Posterior cingulate gyrus (tissue), 11 donors: ENCODE measurements at regions of chr9 and their contacts with region 1.

Region 1: DNA sequence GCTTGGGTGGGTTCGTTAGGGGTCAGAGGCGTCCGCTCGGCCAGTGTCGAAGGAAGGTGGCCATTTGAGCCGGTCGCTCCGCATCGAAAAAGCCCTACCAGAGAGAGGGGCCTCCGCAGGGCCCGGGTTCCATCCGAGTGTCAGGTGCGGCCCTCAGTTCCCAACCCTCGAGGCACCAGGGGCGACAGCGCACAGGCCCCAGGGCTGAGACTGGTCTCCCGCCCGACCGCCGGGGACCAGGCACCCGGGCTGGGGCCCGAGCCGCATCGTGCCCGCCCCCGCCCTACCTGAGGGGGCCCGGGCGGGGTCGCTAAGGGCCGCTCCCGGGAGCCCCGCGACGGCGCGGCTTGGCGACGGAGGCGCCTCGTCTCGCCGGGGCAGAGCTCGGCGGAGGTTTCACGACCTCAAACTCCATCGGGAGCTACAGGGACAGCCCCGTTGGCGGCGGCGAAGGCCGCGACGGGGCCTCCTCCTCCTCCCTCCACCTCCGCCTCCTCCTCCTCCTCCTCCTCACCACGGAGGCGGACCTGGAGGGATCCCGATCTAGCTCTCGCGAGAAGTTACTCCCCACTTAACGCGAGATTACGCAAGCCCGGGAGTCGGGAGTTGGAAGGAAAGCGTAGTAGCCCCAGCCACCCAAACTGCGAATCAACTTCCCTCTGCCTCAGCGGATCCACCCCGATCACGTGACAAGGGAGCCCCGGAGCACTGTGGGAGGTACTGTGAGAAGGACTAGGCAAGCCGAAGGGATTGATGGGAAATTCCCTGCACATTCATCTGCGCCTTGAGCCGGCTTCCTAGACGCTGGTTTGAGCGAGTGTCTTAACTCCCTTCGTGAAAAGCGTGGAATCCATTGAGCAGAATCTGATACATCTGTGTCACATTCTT is at the start of gene RC3H2:
- DNase-seq: peak; percentile 98 to 100 (median 100)

Region 2: GRCh38 chr9:122092611-122093506 is 812.2 kb before region 1 on chr9 and contains the start of gene TTLL11:
- intact Hi-C with region 1: loop called (anchors 10 kb)
- DNase-seq: peak; percentile 96 to 100 (median 98)

Region 3: GRCh38 chr9:122695696-122696095 is 209.4 kb before region 1 on chr9:
- intact Hi-C with region 1: no loop called
- DNase-seq: no peak

Region 4: DNA sequence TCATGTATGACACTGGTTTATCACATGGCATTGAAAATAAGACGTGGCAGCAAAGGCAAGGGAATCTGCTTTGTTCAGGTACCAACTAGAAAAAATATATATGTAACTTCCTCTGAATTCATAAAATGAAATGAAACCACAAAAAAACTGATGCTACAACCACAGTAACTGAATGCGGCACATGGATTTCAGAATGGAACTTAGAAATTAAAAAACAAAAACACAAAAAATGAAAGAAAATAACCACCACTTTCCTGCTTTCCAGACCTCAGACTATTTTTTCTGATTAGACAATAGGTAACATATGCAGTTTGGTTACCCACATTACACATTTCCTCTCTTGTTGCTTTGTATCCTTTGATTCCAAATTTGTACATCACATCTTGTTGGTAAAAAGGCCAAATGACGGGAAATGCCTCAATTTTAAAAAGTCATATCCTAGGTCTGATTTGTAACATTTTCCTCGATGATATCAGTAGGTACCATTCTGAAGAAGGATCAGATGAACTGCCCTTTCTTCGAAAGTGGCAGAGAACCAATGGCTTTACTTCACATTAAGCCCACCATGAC is 58.6 kb before region 1 on chr9:
- intact Hi-C with region 1: no loop called
- DNase-seq: no peak

Region 5: DNA sequence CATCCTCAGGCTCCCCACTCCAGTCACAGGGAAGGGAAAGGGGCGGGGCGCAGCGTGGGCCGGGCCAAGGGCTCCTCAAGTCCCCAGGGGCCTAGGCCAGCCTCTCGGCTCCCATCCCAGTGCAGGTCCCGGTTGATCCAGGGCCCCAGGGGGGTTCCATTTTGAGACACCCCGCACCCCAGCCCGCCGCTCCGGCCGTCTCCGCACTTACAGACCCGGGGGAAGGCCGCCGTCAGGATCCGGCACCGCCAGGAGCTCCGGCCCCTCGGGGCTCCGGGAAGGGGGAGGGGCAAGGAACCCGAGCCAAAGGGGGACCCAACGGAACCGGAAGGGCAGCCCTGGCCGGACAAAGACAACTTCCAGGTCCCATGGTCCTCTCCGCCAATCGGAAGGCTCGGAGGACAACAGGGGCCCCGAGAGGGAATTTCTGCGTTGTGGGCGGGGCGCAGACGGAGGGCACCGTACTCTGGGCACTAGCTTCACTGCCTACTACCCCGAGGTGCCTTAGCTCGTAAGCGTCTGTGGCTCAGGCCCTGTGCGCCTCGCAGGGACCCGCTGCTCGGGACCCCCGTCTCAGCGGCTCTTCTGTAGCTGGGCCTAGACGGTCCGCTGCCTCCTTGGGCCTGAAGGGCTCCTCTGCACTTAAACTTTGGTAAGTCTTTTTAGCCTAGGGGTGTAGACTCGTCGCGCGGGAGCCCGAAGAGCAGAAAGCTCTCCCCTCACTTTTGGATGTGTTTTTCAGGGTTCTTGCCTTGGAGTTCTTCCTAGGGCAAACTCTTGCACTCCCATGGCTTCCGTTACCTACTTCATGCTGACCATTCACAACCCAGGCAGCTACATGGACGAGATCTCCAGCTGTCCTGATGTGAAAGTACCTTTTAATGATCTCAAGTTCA is 26.4 kb after region 1 on chr9 and contains the start of gene ZBTB26:
- intact Hi-C with region 1: loop called (anchors 2 kb)
- DNase-seq: peak; percentile 93 to 99 (median 96)

Region 6: GRCh38 chr9:122991370-122991830 is 86.3 kb after region 1 on chr9:
- intact Hi-C with region 1: loop called (anchors 10 kb)
- DNase-seq: peak in 3 of 10 donors; percentile 18 to 75 (median 25)

Region 7: DNA sequence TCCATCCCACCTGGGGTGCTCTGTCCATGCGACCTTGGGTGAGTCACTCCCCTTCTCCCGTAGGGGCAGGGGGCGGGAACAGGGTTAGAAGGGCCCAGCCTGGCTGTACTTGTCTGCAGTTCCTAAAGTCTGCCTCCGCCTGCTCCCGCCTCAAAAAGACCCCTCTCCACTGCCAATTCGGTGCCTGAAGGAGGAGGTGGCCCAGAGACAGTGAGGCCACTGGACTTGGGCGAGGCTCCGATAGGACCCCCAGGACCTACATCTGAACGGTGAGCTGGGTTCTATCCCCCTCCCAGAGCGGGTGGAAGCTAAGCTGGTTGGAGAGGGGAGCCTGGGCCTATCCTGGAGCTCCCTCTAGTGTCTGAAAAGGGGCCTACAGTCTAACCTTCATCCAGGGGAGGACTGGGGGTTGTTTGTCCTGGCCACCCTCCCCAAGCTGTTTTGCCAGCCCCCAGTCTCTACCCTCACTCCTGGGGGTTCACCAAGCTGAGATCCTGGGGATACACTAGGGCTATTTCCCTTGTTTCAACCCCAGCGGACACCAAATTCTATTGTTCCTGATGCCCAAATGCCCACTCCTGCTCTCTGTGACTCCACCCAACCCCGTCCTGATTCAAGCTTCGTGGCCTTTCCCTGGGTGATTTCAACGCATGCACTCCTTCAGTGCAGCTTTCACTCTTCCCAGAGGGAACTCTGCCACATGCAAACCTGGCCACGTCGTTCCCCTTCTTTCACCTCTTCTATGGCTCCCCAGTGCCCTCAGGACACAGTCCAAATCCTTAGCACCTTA is 444.8 kb after region 1 on chr9:
- intact Hi-C with region 1: loop called (anchors 10 kb)
- DNase-seq: peak in 6 of 10 donors; percentile 52 to 93 (median 66)

Region 8: GRCh38 chr9:123401879-123402513 is 496.9 kb after region 1 on chr9:
- intact Hi-C with region 1: no loop called
- DNase-seq: peak in 6 of 10 donors; percentile 41 to 64 (median 56)